K562 (cell line): ENCODE measurements at regions of chr14 and their contacts with region 1.

Region 1: DNA sequence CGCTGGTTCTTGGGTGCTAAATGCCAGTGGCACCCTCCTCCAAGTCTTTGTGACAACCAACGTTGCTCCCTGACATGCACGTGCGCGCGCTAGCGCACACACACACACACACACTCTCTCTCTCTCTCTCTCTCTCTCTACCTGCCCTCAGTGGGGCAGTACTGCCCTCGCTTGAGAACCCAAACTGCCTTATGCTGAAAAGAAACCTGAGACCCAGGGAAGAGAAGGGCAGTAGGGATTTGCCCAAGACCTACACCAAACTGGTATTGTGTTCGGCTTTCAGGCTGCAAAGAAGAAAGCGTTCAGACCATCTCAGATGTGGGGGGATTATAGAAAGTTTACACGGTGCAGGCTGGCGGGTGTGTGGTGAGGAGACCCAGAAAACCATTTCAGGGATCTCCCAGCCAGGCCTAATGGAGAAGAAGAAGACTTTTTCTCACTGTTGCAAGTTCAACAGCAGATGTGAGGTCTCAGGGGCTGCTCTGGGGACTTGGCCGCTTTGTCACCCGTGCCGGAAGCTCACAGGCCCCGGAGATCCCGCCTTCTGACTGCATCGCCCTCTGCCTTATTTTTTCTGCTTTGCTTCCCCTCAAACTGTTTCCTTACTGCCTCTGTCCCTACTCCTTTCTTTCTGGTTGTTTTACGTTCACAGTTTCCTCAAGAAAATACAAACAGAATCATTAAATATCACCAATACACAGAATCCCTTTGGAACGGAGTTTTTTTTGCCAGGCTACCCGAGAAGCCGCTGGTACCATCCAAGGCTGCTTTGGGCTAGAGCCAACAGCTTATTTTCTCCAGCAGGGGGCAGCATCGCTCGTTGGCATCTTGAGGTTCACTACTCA is 82.4 kb downstream of the PPM1A start:
- DNase-seq: peak; percentile 54 to 79 (median 54)
- ATAC-seq: peak; percentile 91
- H3K4me3 ChIP-seq: peak overlapping the region; percentile 21
- H3K27ac ChIP-seq: peak overlapping the region; percentile 37; the same call in 2 of the 3 replicates
- H3K4me1 ChIP-seq: peaks cover 2 to 6% of the 10 kb centered on the region in 2 experiments; a peak in 3 of 5 replicates
- H3K27me3 ChIP-seq: no peaks in the 10 kb centered on the region
- CTCF ChIP-seq: peak; percentile 66 to 76 (median 67)
- EP300 ChIP-seq: no peak
- POLR2A ChIP-seq: 0 out of 2 replicates have a peak, but pooled peaks have one; percentile 38
- RAD21 ChIP-seq: peak; percentile 46 to 51; a peak in 3 of 4 replicates

Region 2: DNA sequence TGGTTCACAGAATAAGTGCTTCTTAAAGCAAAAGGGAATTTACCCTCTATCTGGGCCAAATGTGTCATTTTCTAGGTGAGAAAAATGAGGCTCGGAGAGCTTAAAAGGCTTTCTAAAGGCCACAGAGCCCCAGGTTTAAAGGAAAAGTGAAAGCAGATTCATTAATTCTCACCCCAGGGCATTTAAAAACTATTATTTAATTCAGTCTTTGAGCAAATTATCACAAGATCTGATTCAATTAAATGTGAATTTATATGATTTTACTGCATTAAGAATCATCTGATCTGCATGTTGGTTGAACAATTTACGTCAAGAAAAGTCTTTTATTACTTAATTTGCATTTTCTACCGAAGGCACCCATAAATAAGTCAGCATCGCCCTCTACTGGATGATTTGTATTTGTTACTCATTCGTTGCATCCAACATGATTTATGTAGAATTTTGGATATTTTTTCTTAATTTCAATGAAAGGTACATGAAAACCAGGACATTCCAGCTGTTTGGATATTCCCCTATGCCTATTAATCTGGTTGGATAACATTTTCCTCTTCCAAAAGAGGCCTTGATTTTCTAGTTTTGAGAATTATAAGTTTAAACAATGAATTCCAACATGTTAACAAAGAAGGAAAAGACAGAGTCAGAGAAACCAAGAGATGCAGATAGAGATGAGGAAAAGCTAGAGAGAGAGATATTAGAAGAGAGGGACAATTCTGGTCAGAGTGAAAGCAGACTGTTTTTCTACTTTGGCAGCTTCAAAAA is 147.1 kb before region 1 on chr14:
- CTCF ChIA-PET with region 1: no interaction called
- POLR2A ChIA-PET with region 1: no interaction called
- in situ Hi-C with region 1: no loop called
- intact Hi-C with region 1: loop called (anchors 5 kb)
- DNase-seq: peak in 3 of 4 experiments; percentile 10 to 57 (median 11)
- ATAC-seq: peak; percentile 53; the same call in 2 of the 3 replicates
- H3K4me3 ChIP-seq: no peak overlapping the region
- H3K27ac ChIP-seq: no peak overlapping the region
- H3K4me1 ChIP-seq: no peaks in the 10 kb centered on the region
- H3K27me3 ChIP-seq: peaks cover 0 to 3% of the 10 kb centered on the region in 2 experiments; a peak in 1 of 5 replicates
- CTCF ChIP-seq: peak; percentile 39 to 76 (median 44); a peak in 4 of 6 replicates
- EP300 ChIP-seq: no peak
- POLR2A ChIP-seq: no peak
- RAD21 ChIP-seq: peak; percentile 83 to 88

Region 3: DNA sequence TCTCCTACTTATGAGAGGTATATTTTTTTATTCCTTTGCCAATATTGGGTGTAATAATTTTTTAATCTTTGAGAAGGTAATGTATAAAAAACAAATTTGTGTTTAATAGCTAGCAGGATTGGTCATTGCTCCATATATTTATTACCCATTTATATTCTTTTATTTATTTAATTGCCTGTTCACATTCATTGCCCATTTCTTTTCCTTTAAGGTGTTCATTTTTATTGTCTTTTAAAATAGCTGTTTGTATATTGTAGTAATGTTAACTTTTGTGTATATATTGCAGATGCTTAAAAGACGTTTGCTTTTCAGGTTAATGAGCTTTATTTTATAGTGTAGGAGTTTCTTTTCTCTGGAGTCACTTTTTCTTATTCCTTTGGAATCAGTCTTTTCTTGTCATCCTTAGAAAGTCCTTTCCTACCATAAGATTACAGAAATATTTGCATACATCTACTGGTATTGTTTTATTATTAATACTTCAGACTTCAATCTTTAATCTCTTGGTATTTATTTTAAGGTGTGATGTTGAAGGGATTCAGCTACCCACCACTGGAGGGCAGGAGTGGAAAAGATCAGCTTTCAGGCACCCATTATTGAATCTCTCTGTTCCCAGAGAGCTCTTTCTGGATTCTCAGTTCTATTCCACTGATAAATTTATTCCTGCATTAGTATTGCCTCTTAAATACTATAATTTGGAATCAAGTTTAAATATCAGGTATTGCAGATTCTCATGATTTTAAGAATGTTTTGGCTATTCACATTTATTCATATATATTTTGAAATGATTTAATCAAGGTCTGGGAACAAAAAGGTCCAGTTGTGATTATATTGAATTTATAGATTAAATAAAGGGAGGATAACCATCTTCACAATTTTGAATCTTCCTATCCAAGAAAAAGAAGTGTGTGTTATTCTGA is 65.1 kb before region 1 on chr14:
- CTCF ChIA-PET with region 1: no interaction called
- POLR2A ChIA-PET with region 1: no interaction called
- in situ Hi-C with region 1: no loop called
- intact Hi-C with region 1: loop called (anchors 5 kb)
- DNase-seq: peak; percentile 10 to 27 (median 18)
- ATAC-seq: peak; percentile 78
- H3K4me3 ChIP-seq: no peak overlapping the region
- H3K27ac ChIP-seq: no peak overlapping the region
- H3K4me1 ChIP-seq: peaks cover 0 to 2% of the 10 kb centered on the region in 2 experiments; a peak in 3 of 5 replicates
- H3K27me3 ChIP-seq: no peaks in the 10 kb centered on the region
- CTCF ChIP-seq: peak in 2 of 3 experiments; percentile 33 to 36; a peak in 2 of 6 replicates
- EP300 ChIP-seq: no peak
- POLR2A ChIP-seq: no peak
- RAD21 ChIP-seq: peak in 1 of 2 experiments; percentile 31; a peak in 1 of 4 replicates

Region 4: GRCh38 chr14:60561845-60562746 is 230.7 kb after region 1 on chr14:
- CTCF ChIA-PET with region 1: no interaction called
- POLR2A ChIA-PET with region 1: no interaction called
- in situ Hi-C with region 1: no loop called
- intact Hi-C with region 1: loop called (anchors 5 kb)
- DNase-seq: peak; percentile 13 to 61 (median 19)
- ATAC-seq: peak; percentile 84
- H3K4me3 ChIP-seq: no peak overlapping the region
- H3K27ac ChIP-seq: no peak overlapping the region
- H3K4me1 ChIP-seq: no peaks in the 10 kb centered on the region
- H3K27me3 ChIP-seq: no peaks in the 10 kb centered on the region
- CTCF ChIP-seq: peak; percentile 60 to 95 (median 77)
- EP300 ChIP-seq: no peak
- POLR2A ChIP-seq: no peak
- RAD21 ChIP-seq: peak; percentile 67 to 82

Region 5: GRCh38 chr14:60839657-60840056 is 508.2 kb after region 1 on chr14:
- CTCF ChIA-PET with region 1: no interaction called
- POLR2A ChIA-PET with region 1: no interaction called
- in situ Hi-C with region 1: no loop called
- intact Hi-C with region 1: no loop called
- DNase-seq: no peak
- ATAC-seq: no peak
- H3K4me3 ChIP-seq: no peak overlapping the region
- H3K27ac ChIP-seq: no peak overlapping the region
- H3K4me1 ChIP-seq: peaks cover 0 to 4% of the 10 kb centered on the region in 2 experiments; a peak in 1 of 5 replicates
- H3K27me3 ChIP-seq: no peaks in the 10 kb centered on the region
- CTCF ChIP-seq: no peak
- EP300 ChIP-seq: no peak
- POLR2A ChIP-seq: no peak
- RAD21 ChIP-seq: no peak